Activated T-helper 2 cell treated with anti-CD3 and anti-CD28 coated beads, Interferon-gamma antibody, Interleukin-2, Interleukin-4, amounts not matched to agents 10 μg/mL and 5 μg/mL and 100 μg/mL, durations not matched to agents 14 hours and 24 hours and 36 hours (primary cell): ENCODE measurements at regions of chr16 and their contacts with region 1.

Region 1: DNA sequence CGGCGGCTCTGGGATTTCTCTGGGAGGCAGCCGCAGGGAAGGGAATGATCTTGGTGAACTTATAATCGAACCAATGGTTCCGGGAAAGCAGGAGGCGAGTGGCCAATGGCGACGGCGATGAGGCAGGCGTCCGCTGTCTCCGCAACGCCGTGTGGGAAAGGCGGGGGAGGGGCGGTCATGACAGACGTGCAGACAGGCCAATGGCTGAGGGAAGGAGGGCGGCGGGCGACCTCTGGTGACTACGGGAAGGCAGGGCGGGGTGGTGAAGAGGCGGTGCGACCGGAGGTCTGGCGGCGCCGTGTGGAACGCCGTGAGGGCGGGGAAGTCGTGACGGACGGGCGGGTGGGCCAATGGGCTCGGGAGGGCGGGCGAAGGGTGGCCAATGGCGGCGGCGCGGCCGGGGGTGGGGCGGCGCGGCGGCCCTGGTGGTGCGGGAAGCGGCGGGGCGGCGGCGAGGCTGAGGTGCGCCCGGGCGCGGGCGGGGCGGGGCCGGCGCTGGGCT is at the start of gene RAB40C:
- DNase-seq: peak; percentile 98
- H3K4me3 Mint-ChIP-seq: peak within 1 kb of the TSS; percentile 97
- H3K27ac Mint-ChIP-seq: peak within 1 kb of the TSS; percentile 98
- H3K4me1 Mint-ChIP-seq: peaks cover 16% of the 10 kb centered on the region
- H3K27me3 Mint-ChIP-seq: no peaks in the 10 kb centered on the region
- total RNA-seq, gene RAB40C: 13.4 and 16.2 TPM in 2 replicates

Region 2: GRCh38 chr16:636206-637080 is 46.7 kb after region 1 on chr16 and contains the start of gene METTL26:
- intact Hi-C with region 1: loop called (anchors 1 kb)
- DNase-seq: peak; percentile 91
- H3K4me3 Mint-ChIP-seq: peak within 1 kb of the TSS; percentile 90
- H3K27ac Mint-ChIP-seq: peak within 1 kb of the TSS; percentile 89
- H3K4me1 Mint-ChIP-seq: peaks cover 8% of the 10 kb centered on the region
- H3K27me3 Mint-ChIP-seq: no peaks in the 10 kb centered on the region
- total RNA-seq, gene METTL26: 128 and 131 TPM in 2 replicates

Region 3: DNA sequence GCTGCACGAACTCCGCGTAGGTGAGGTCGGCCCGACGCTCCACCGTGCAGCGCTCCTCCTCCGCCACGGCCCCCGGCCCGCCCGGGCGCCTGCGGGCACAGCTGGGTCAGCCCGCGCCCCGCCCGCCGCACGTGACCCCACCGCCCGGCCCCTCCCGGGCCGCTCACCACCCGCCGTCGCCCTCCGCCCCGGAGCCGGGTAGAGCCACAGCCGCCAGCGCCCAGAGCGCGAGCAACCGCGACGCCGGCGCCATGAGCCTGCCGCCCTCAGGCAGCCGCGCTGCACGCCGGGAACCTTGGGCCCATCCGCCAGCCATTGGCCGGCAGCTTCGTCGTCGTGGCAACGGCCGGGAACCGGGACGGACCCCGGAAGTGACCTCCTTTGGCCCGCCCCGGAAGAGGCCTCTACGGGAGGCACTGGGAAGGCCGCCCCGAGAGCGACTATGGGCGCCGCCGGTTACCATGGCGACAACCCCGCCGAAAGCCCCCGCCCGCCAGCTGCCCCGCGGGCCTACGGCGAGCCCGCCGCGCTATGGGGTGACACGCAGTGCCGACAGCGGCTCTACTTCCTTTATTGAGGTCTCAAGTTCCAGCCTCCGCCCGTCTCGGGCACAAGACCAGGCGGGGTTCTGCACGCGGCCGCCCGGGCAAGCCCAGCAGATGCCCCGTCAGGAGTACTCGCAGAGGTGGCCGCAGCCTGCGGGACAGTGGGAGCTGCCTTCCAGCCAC is 94.5 kb after region 1 on chr16 and contains the start of gene JMJD8:
- intact Hi-C with region 1: loop called (anchors 5 kb)
- DNase-seq: peak; percentile 95
- H3K4me3 Mint-ChIP-seq: peak within 1 kb of the TSS; percentile 76
- H3K27ac Mint-ChIP-seq: peak within 1 kb of the TSS; percentile 52
- H3K4me1 Mint-ChIP-seq: peaks cover 15% of the 10 kb centered on the region
- H3K27me3 Mint-ChIP-seq: no peaks in the 10 kb centered on the region
- total RNA-seq, gene JMJD8: 48.8 and 52.9 TPM in 2 replicates